Prostate gland (tissue), 2 donors: ENCODE measurements at regions of chr10 and their contacts with region 1.

Region 1: DNA sequence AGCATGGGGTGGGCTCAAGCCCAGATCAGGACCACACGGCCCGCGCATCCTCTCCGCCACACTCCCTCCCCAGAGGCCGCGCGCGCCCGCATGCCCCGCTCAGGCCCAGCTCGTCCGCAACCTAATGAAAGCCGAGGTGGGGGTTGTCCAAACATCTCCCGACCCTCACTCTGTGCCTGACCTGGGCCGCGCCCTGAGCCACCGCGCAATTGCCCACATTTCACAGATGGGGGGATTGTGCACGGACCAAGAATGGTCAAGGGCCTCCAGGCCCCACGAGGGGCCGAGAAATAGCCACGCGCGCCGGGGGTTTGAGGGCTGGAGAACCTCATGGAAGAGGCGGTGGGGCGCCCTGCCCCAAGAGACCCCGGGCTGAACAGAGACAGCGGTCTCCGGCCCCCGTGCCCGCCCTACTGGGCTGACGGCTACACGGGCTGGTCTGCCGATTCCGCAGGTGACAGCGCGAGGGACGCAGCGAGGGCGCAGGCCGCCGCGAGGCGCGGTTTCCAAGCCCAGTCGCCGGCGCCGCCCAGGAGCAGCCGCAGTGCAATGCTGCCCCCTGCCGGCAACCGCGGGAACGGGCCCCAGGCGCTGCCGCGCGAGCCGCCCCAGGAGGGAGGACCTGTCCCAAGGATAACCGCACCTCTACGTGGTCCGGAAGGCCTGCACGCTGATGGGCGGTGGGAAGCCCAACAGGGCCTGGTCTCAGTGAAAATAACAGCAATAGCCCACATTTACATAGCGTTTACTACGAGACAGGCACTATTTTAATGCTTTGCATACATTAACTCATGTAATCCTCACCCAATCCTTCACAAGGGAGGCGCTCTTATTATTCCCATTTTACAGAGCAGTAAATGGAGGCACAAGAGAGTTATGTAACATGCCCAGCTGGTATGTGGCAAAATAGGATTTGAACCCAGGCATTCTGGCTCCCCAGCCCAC is 10.5 kb upstream of the GRID1 start:
- DNase-seq: peak; percentile 55
- H3K4me3 ChIP-seq: no peak overlapping the region
- H3K27ac ChIP-seq: no peak overlapping the region
- H3K4me1 ChIP-seq: no peaks in the 10 kb centered on the region
- H3K27me3 ChIP-seq: no peaks in the 10 kb centered on the region
- CTCF ChIP-seq: peak; percentile 97 to 99 (median 98)
- POLR2A ChIP-seq: no peak

Region 2: GRCh38 chr10:84613336-84614021 is 1763.6 kb before region 1 on chr10:
- intact Hi-C with region 1: loop called (anchors 5 kb)
- DNase-seq: peak; percentile 53
- H3K4me3 ChIP-seq: no peak overlapping the region
- H3K27ac ChIP-seq: no peak overlapping the region
- H3K4me1 ChIP-seq: no peaks in the 10 kb centered on the region
- H3K27me3 ChIP-seq: no peaks in the 10 kb centered on the region
- CTCF ChIP-seq: peak in 3 of 4 experiments; percentile 40 to 60 (median 56)
- POLR2A ChIP-seq: no peak

Region 3: GRCh38 chr10:84783386-84783785 is 1593.7 kb before region 1 on chr10:
- intact Hi-C with region 1: loop called (anchors 5 kb)
- DNase-seq: no peak
- H3K4me3 ChIP-seq: no peak overlapping the region
- H3K27ac ChIP-seq: no peak overlapping the region
- H3K4me1 ChIP-seq: no peaks in the 10 kb centered on the region
- H3K27me3 ChIP-seq: no peaks in the 10 kb centered on the region
- CTCF ChIP-seq: peak in 2 of 4 experiments; percentile 53 to 55
- POLR2A ChIP-seq: no peak

Region 4: DNA sequence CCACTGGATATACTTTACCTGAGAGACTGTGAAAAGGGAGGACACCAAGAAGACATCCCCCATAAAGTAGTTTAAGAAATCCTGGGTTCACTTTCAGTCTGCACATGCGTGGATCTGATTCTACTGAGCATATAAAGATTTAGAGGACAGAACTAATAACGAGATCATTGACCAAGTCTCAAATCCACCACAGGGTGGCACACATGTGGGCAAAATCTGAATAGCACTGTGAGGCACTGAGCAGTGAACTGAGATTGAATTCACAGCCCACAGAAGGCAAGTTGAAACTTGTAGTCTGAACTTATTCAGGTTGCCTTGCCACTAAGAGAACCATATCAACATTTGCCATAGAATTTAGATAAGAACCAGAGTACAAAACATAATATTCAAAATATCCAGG is 829.1 kb before region 1 on chr10:
- intact Hi-C with region 1: loop called (anchors 5 kb)
- DNase-seq: peak; percentile 32
- H3K4me3 ChIP-seq: no peak overlapping the region
- H3K27ac ChIP-seq: no peak overlapping the region
- H3K4me1 ChIP-seq: no peaks in the 10 kb centered on the region
- H3K27me3 ChIP-seq: no peaks in the 10 kb centered on the region
- CTCF ChIP-seq: peak in 3 of 4 experiments; percentile 30 to 59 (median 52)
- POLR2A ChIP-seq: no peak